B cell (primary cell): ENCODE measurements at regions of chr9 and their contacts with region 1.

Region 1: DNA sequence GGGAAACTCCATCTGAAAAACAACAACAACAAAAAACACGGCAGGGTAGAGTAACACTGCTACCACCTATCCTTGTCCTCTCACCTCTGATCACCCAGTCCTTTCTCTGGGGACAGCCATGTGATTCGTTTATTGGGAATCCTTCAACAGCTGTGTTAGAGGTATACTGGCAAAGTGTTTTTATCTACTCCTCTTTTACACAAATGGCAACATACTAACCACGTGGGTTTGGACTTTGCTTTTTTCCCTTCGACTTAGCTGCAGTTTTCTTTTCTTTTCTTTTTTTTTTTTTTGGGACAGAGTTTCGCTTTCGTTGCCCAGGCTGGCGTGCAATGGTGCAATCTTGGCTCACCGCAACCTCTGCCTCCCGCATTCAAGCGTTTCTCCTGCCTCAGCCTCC is 11.2 kb upstream of the SET start:
- DNase-seq: no peak
- ATAC-seq: no peak
- H3K4me3 ChIP-seq: no peak overlapping the region
- H3K4me3 Mint-ChIP-seq: no peak overlapping the region
- H3K27ac ChIP-seq: no peak overlapping the region
- H3K27ac Mint-ChIP-seq: no peak overlapping the region
- H3K4me1 ChIP-seq: peaks cover 4 to 16% of the 10 kb centered on the region in 2 donors
- H3K4me1 Mint-ChIP-seq: peaks cover 6% of the 10 kb centered on the region
- H3K27me3 ChIP-seq: no peaks in the 10 kb centered on the region
- H3K27me3 Mint-ChIP-seq: no peaks in the 10 kb centered on the region
- CTCF ChIP-seq: no peak

Region 2: DNA sequence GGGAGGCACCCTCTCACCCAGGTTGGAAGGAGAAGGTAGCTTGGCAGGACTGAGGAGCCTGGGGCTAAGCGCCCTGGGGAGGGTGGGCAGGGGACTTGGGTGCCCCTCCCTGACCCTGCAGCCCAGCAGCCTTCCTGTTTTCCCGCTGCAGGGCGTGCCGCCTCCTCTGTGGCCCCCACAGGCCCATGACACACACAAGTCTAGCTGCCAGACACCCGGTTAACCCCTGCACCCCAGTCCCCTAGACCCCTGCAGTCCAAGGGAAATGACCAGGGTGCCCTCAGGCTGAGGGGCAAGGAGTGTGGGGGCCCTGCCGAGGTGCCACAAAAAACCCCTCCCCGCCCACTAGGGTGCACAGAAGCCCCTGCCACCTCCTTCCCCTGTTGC is 435.0 kb before region 1 on chr9:
- CTCF ChIA-PET with region 1: no interaction called
- POLR2A ChIA-PET with region 1: no interaction called
- intact Hi-C with region 1: no loop called
- DNase-seq: no peak
- ATAC-seq: no peak
- H3K4me3 ChIP-seq: no peak overlapping the region
- H3K4me3 Mint-ChIP-seq: no peak overlapping the region
- H3K27ac ChIP-seq: no peak overlapping the region
- H3K27ac Mint-ChIP-seq: no peak overlapping the region
- H3K4me1 ChIP-seq: peaks cover 5 to 9% of the 10 kb centered on the region in 2 donors
- H3K4me1 Mint-ChIP-seq: peaks cover 13% of the 10 kb centered on the region
- H3K27me3 ChIP-seq: peaks cover 0 to 32% (median 7%) of the 10 kb centered on the region in 4 experiments
- H3K27me3 Mint-ChIP-seq: peaks cover 33% of the 10 kb centered on the region
- CTCF ChIP-seq: no peak

Region 3: DNA sequence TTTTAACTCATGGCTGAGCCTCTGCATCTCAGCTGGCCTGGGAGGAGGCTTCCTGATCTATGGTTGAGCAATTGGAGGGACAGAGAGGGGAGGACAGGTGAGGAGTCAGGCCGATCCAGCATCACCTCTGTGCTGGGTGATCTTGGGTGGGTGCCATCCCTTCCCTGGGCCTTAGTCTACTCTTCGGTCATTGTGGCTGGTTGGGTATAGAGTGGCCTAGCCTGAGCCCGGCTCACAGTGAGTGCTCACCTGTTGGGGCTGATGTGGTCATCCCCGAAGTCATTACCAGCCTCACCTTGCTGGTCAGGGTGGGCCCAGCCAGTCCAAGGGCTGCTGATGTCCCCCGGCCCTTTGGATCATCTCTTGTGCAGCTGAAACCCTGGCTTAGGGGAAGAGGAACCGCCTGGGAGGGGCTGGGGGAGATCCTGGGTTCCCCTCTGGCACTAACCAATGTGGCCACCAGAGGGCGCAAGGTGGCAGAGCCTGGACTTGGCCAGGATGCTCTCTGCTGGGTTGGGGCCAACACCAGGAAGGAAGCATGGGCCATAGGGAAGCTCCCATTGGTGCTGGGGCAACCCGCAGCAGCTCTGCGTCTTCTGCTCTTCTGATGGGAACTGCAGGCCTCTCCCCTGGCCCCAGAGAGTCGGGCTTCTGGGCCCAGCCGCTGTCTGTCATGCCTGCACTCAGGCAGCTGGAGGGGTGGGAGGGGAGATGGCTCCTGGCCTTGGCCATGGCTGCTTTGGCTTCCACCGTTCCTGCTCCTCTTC is 239.3 kb before region 1 on chr9:
- CTCF ChIA-PET with region 1: no interaction called
- POLR2A ChIA-PET with region 1: no interaction called
- intact Hi-C with region 1: no loop called
- DNase-seq: peak; percentile 84
- ATAC-seq: peak; percentile 94
- H3K4me3 ChIP-seq: no peak overlapping the region
- H3K4me3 Mint-ChIP-seq: no peak overlapping the region
- H3K27ac ChIP-seq: no peak overlapping the region
- H3K27ac Mint-ChIP-seq: no peak overlapping the region
- H3K4me1 ChIP-seq: peaks cover 3 to 8% of the 10 kb centered on the region in 2 donors
- H3K4me1 Mint-ChIP-seq: peaks cover 7% of the 10 kb centered on the region
- H3K27me3 ChIP-seq: no peaks in the 10 kb centered on the region
- H3K27me3 Mint-ChIP-seq: no peaks in the 10 kb centered on the region
- CTCF ChIP-seq: peak; percentile 90

Region 4: GRCh38 chr9:128587453-128587852 is 90.3 kb before region 1 on chr9:
- CTCF ChIA-PET with region 1: no interaction called
- POLR2A ChIA-PET with region 1: no interaction called
- intact Hi-C with region 1: no loop called
- DNase-seq: no peak
- ATAC-seq: no peak
- H3K4me3 ChIP-seq: no peak overlapping the region
- H3K4me3 Mint-ChIP-seq: no peak overlapping the region
- H3K27ac ChIP-seq: no peak overlapping the region
- H3K27ac Mint-ChIP-seq: no peak overlapping the region
- H3K4me1 ChIP-seq: no peaks in the 10 kb centered on the region
- H3K4me1 Mint-ChIP-seq: no peaks in the 10 kb centered on the region
- H3K27me3 ChIP-seq: no peaks in the 10 kb centered on the region
- H3K27me3 Mint-ChIP-seq: no peaks in the 10 kb centered on the region
- CTCF ChIP-seq: no peak

Region 5: GRCh38 chr9:129751826-129752801 is 1074.3 kb after region 1 on chr9:
- CTCF ChIA-PET with region 1: no interaction called
- POLR2A ChIA-PET with region 1: interaction called, 11 read pairs
- intact Hi-C with region 1: no loop called
- DNase-seq: no peak
- ATAC-seq: no peak
- H3K4me3 ChIP-seq: no peak overlapping the region
- H3K4me3 Mint-ChIP-seq: no peak overlapping the region
- H3K27ac ChIP-seq: no peak overlapping the region
- H3K27ac Mint-ChIP-seq: no peak overlapping the region
- H3K4me1 ChIP-seq: peaks cover 7 to 8% of the 10 kb centered on the region in 2 donors
- H3K4me1 Mint-ChIP-seq: peaks cover 5% of the 10 kb centered on the region
- H3K27me3 ChIP-seq: peaks cover 0 to 8% (median 3%) of the 10 kb centered on the region in 4 experiments
- H3K27me3 Mint-ChIP-seq: peaks cover 17% of the 10 kb centered on the region
- CTCF ChIP-seq: no peak